Esophagus squamous epithelium (tissue), 5 donors: ENCODE measurements at regions of chr15 and their contacts with region 1.

Region 1: DNA sequence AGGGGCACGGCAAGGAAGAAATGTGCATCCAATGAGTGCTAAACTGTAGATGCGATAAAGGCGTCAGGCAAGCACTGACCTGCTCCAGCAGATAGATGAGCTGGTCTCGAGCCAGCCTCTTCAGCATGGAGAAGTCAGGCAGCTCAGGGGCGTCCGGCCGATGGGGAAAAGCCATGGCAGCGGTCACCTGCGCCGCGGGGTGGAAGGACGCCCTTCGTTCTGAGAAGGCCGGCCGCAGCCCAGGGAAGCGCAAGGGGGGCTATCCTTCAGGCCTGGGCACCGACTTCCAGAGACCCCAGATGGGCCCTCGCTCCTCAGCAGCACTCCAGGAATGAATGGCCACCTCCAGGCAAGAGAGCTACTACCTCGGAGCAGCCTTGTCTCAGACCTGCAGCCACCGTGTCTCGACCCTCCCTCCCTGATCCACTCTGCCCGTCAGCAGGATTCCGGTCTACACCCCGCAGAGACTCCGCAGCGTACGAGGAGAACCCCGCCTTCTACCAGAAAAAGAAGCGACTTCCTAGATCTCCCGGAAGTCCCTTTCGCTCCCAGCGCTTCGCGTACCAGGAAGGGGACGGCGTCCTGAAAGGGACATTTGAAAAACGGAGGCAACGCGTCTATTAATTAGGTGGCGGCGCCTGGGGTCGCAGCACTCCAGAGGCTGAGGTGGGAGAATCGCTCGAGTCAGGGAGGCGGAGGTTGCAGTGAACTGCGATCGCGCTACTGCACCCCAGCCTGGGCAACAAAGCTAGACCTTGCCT is at the start of gene VPS33B:
- DNase-seq: peak; percentile 18
- H3K4me3 ChIP-seq: peak within 1 kb of the TSS; percentile 73 to 97 (median 94)
- H3K27ac ChIP-seq: peak within 1 kb of the TSS; percentile 80 to 90 (median 86)
- H3K4me1 ChIP-seq: peaks cover 15 to 36% (median 17%) of the 10 kb centered on the region in 3 donors
- H3K27me3 ChIP-seq: no peaks in the 10 kb centered on the region
- CTCF ChIP-seq: peak in 1 of 6 experiments; percentile 21
- POLR2A ChIP-seq: peak in 2 of 4 donors; percentile 40 to 41
- total RNA-seq, gene VPS33B: 3.3 to 9.0 (median 8.1) TPM

Region 2: GRCh38 chr15:90959894-90960293 is 62.4 kb before region 1 on chr15:
- intact Hi-C with region 1: loop called (anchors 10 kb)
- DNase-seq: no peak
- H3K4me3 ChIP-seq: no peak overlapping the region
- H3K27ac ChIP-seq: peak overlapping the region in 3 of 4 donors; percentile 26 to 43 (median 37)
- H3K4me1 ChIP-seq: peaks cover 19 to 33% (median 22%) of the 10 kb centered on the region in 3 donors
- H3K27me3 ChIP-seq: no peaks in the 10 kb centered on the region
- CTCF ChIP-seq: no peak
- POLR2A ChIP-seq: no peak